ENCODE measurements at regions of chr1 and their contacts with region 1.

Region 1: GRCh38 chr1:206106328-206107167 is 10.6 kb downstream of the AVPR1B start:
- DNase-seq: peak; percentile 50
- H3K4me3 ChIP-seq: no peak overlapping the region
- CTCF ChIP-seq: peak; percentile 89

Region 2: DNA sequence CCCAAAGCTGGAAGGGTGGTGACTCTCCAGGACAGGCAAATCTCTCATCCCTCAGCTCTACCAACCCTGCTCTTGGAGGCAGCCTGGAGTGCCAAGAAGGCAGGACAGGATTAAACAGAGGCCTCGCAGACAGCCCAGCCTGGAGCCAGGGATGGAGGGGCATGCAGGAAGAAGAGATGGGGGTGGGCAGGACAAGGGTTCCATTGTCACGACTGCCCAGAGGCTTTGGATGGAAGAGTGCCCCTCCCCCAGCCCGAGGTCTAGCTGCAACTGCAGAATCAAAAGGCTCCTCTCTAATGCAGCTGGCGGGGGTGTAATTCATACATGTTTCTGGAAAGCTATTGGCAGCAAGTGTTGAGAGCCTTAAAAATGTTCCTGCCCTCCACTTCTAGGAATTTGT is 112.2 kb before region 1 on chr1:
- CTCF ChIA-PET with region 1: interaction called, 62 read pairs
- POLR2A ChIA-PET with region 1: no interaction called
- DNase-seq: no peak
- H3K4me3 ChIP-seq: no peak overlapping the region
- CTCF ChIP-seq: no peak

Region 3: GRCh38 chr1:206030714-206031113 is 75.8 kb before region 1 on chr1:
- CTCF ChIA-PET with region 1: interaction called, 121 read pairs
- POLR2A ChIA-PET with region 1: no interaction called
- DNase-seq: no peak
- H3K4me3 ChIP-seq: no peak overlapping the region
- CTCF ChIP-seq: peak; percentile 91

Region 4: DNA sequence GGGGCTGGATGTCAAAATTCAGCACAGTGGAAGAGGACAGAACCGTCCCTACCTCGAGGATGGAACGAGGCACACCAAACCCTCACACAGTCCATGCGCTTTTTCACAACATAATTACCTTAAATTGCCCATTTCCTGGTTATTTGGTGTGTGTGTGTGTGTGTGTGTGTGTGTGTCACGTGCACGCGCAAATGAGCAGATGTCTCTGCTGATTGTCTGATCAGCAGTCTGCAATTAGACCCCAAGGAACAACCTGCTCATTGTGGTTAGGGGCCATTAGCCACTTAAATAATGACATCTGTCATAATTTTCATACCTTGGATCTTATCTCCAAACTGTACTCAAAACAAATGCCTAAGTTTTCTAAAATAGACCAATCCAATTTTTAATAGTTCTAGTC is 12.5 kb before region 1 on chr1:
- CTCF ChIA-PET with region 1: interaction called, 77 read pairs
- POLR2A ChIA-PET with region 1: no interaction called
- DNase-seq: no peak
- H3K4me3 ChIP-seq: no peak overlapping the region
- CTCF ChIP-seq: no peak

Region 5: GRCh38 chr1:206133751-206134415 is 27.3 kb after region 1 on chr1:
- CTCF ChIA-PET with region 1: interaction called, 17 read pairs
- POLR2A ChIA-PET with region 1: no interaction called
- DNase-seq: peak; percentile 3
- H3K4me3 ChIP-seq: no peak overlapping the region
- CTCF ChIP-seq: no peak

Measured in AG04449 (cell line).